ENCODE measurements at regions of chr3 and their contacts with region 1.

Region 1: GRCh38 chr3:123652346-123652984 is 67.6 kb upstream of the HACD2 start:
- DNase-seq: peak; percentile 77 to 85
- H3K4me3 ChIP-seq: no peak overlapping the region
- H3K27ac ChIP-seq: peak overlapping the region; percentile 73 to 84 (median 78)
- H3K4me1 ChIP-seq: peaks cover 18 to 23% of the 10 kb centered on the region in 2 donors
- H3K27me3 ChIP-seq: no peaks in the 10 kb centered on the region
- CTCF ChIP-seq: peak; percentile 70 to 96 (median 95)
- POLR2A ChIP-seq: no peak

Region 2: DNA sequence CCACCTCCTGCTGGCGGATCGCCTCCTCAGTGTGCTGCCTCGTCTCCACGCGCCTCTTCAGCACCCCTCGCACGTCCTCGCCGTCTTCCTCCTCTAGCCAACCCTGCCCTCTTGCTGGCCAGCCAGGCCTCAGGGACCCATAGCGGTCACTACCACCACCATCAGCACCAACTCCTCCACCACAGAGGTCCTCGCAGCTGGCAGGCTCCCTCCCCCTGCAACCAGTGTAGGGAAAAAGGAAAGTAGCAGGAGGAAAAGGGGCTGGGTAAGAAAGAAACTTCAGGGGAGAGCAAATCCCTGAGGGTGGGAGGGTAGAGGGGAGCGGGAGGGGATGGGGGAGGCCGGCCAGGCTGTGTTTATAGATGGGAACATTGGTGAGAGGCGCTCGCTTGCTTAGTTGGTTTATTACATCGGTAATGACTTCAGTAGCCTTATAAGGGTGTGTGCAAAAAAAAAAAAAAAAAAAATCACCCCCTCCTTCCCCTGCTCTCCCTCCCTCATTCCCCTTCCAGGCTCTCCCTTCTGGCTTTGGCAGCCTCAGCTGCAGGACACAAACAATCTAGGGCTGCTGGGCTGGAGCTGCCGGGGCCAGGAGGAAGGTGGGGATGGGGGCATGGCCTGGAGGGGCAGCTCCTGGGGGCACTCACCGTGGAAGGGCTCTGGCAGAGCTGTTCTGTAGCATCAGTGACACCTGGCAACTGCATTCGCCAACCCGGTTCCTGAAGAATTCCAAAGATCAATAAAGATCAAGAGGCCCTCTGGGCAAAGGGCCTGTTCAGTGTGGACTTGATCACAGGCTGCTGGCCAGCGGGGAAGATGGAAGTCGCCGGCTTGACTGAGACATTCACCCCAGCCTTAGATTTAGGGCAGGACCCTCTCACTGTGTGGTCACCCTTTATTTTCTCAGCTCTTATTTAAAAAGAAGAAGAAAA is 48.6 kb after region 1 on chr3:
- intact Hi-C with region 1: loop called (anchors 5 kb)
- DNase-seq: peak in 1 of 2 donors; percentile 17
- H3K4me3 ChIP-seq: no peak overlapping the region
- H3K27ac ChIP-seq: peak overlapping the region; percentile 26 to 89 (median 52)
- H3K4me1 ChIP-seq: peaks cover 16 to 23% of the 10 kb centered on the region in 2 donors
- H3K27me3 ChIP-seq: no peaks in the 10 kb centered on the region
- CTCF ChIP-seq: no peak
- POLR2A ChIP-seq: peak in 1 of 2 donors; percentile 17

Region 3: DNA sequence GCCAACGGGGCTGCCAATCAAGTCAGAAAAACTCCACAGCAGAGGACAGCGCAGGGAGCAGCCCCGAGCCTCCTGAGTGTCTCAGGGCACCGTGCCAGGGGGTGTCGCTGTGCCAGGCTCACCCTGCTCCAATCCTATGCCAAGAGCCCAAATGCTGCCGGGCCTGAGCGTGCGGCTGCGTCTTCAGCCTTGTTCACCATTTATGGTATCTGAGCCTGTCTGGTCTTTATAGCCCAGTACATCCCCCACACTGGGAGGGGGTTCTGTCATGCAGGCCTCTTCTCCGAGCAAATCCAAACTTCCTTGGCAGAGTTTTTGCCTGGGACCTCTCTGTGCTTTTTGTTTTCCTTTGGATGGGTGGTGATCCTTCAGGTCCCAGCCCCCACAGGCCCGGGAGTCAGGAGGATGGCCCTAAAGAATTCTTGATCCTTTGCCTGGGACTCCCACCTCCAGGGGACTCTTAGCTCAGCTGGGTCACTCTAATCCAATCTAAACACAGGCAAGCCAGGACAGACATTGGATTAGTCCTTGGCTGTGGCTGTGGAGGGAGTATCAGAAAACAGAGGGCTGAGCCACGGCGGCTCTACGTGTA is 67.5 kb after region 1 on chr3:
- intact Hi-C with region 1: loop called (anchors 5 kb)
- DNase-seq: peak; percentile 73 to 85
- H3K4me3 ChIP-seq: no peak overlapping the region
- H3K27ac ChIP-seq: peak overlapping the region in 2 of 3 donors; percentile 46 to 52
- H3K4me1 ChIP-seq: peaks cover 3 to 22% of the 10 kb centered on the region in 2 donors
- H3K27me3 ChIP-seq: no peaks in the 10 kb centered on the region
- CTCF ChIP-seq: no peak
- POLR2A ChIP-seq: no peak

Measured in thyroid gland (tissue), 4 donors.